Sciatic nerve (tissue), 2 donors: ENCODE measurements at regions of chr10 and their contacts with region 1.

Region 1: GRCh38 chr10:29857843-29858701 is 201.3 kb downstream of the JCAD start:
- DNase-seq: no peak
- ATAC-seq: no peak

Region 2: GRCh38 chr10:29501692-29502091 is 356.4 kb before region 1 on chr10:
- intact Hi-C with region 1: no loop called
- DNase-seq: no peak
- ATAC-seq: peak; percentile 82

Region 3: GRCh38 chr10:29611781-29612381 is 246.2 kb before region 1 on chr10:
- intact Hi-C with region 1: loop called (anchors 5 kb)
- DNase-seq: no peak
- ATAC-seq: no peak